Naive thymus-derived CD4-positive, alpha-beta T cell (primary cell): ENCODE measurements at regions of chr7 and their contacts with region 1.

Region 1: GRCh38 chr7:116180302-116180701 is 30.0 kb upstream of the TES start:
- DNase-seq: peak in 7 of 9 donors; percentile 47 to 73 (median 61)
- ATAC-seq: peak; percentile 84
- H3K4me3 ChIP-seq: no peak overlapping the region
- H3K4me3 Mint-ChIP-seq: no peak overlapping the region
- H3K27ac ChIP-seq: no peak overlapping the region
- H3K27ac Mint-ChIP-seq: peak overlapping the region in 1 of 9 donors; percentile 36
- H3K4me1 ChIP-seq: peaks cover 0 to 3% of the 10 kb centered on the region in 2 donors
- H3K4me1 Mint-ChIP-seq: peaks cover 0 to 12% (median 2%) of the 10 kb centered on the region in 7 donors
- H3K27me3 ChIP-seq: no peaks in the 10 kb centered on the region
- H3K27me3 Mint-ChIP-seq: peaks cover 0 to 15% (median 0%) of the 10 kb centered on the region in 5 donors

Region 2: DNA sequence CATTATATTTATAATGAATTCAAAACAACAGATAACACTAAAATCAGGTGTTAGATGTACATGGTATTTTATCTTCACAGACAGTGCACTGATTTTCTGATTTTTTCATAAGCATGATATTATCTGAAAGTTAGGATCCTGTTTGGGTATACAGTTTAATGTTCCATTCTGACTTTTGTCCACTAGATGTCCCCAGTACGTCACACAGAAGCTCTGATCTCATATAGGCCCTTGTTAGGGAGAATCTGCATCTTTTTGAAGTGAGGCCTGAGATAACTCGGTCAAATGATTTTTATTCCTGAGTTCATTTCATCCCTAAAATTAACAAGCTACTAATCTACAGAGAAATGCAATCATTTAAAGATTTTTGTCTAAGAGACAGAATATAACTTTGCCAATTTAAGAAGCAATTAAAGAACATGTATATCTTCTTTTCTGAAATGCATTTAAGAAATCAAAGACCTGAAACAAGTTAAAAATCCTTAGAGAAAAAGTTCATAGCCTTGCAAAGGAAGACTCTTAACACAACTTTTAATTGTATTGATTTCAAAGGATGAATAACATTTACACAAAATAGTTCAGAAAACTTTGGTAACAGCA is 42.0 kb before region 1 on chr7:
- CTCF ChIA-PET with region 1: interaction called, 3 read pairs
- POLR2A ChIA-PET with region 1: no interaction called
- intact Hi-C with region 1: loop called in 1 of 2 experiments (anchors 2 kb)
- DNase-seq: peak in 5 of 9 donors; percentile 22 to 42 (median 27)
- ATAC-seq: peak; percentile 89
- H3K4me3 ChIP-seq: no peak overlapping the region
- H3K4me3 Mint-ChIP-seq: no peak overlapping the region
- H3K27ac ChIP-seq: no peak overlapping the region
- H3K27ac Mint-ChIP-seq: no peak overlapping the region
- H3K4me1 ChIP-seq: no peaks in the 10 kb centered on the region
- H3K4me1 Mint-ChIP-seq: peaks cover 0 to 18% (median 8%) of the 10 kb centered on the region in 7 donors
- H3K27me3 ChIP-seq: peaks cover 0 to 2% of the 10 kb centered on the region in 2 donors
- H3K27me3 Mint-ChIP-seq: peaks cover 0 to 22% (median 10%) of the 10 kb centered on the region in 5 donors

Region 3: GRCh38 chr7:116218051-116218645 is 37.8 kb after region 1 on chr7:
- CTCF ChIA-PET with region 1: interaction called, 42 read pairs
- POLR2A ChIA-PET with region 1: no interaction called
- intact Hi-C with region 1: no loop called
- DNase-seq: no peak
- ATAC-seq: peak; percentile 36
- H3K4me3 ChIP-seq: no peak overlapping the region
- H3K4me3 Mint-ChIP-seq: peak overlapping the region in 9 of 10 donors; percentile 41 to 76 (median 61)
- H3K27ac ChIP-seq: peak overlapping the region; percentile 4
- H3K27ac Mint-ChIP-seq: peak overlapping the region; percentile 0 to 92 (median 44)
- H3K4me1 ChIP-seq: peaks cover 82 to 85% of the 10 kb centered on the region in 2 donors
- H3K4me1 Mint-ChIP-seq: peaks cover 69 to 96% (median 92%) of the 10 kb centered on the region in 7 donors
- H3K27me3 ChIP-seq: no peaks in the 10 kb centered on the region
- H3K27me3 Mint-ChIP-seq: no peaks in the 10 kb centered on the region

Region 4: GRCh38 chr7:116251675-116252074 is 71.4 kb after region 1 on chr7:
- CTCF ChIA-PET with region 1: interaction called, 10 read pairs
- POLR2A ChIA-PET with region 1: no interaction called
- intact Hi-C with region 1: no loop called
- DNase-seq: no peak
- ATAC-seq: no peak
- H3K4me3 ChIP-seq: no peak overlapping the region
- H3K4me3 Mint-ChIP-seq: no peak overlapping the region
- H3K27ac ChIP-seq: no peak overlapping the region
- H3K27ac Mint-ChIP-seq: peak overlapping the region in 6 of 9 donors; percentile 14 to 65 (median 48)
- H3K4me1 ChIP-seq: no peaks in the 10 kb centered on the region
- H3K4me1 Mint-ChIP-seq: peaks cover 7 to 46% (median 29%) of the 10 kb centered on the region in 7 donors
- H3K27me3 ChIP-seq: no peaks in the 10 kb centered on the region
- H3K27me3 Mint-ChIP-seq: no peaks in the 10 kb centered on the region

Region 5: DNA sequence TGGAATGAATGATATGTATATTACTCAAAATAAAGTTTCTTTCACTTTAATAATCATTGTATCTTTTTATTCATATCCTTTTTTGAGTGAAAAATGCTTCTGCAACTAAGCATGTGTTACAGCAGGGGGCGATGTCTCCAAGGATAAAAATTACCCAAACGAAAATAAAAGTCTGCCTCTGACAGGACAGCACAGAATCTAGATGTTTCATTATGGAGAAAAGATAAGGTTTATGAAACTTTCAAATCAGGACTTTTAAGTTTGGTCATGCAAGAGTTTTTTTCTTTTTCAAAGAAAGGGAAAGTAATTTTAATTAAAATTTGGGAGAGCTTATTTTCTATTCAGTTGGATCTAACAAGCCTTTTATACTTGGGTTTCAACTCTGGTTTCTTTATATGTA is 78.4 kb after region 1 on chr7:
- CTCF ChIA-PET with region 1: interaction called, 10 read pairs
- POLR2A ChIA-PET with region 1: no interaction called
- intact Hi-C with region 1: loop called in 1 of 2 experiments (anchors 1 kb)
- DNase-seq: peak in 7 of 9 donors; percentile 14 to 45 (median 36)
- ATAC-seq: peak; percentile 82
- H3K4me3 ChIP-seq: no peak overlapping the region
- H3K4me3 Mint-ChIP-seq: no peak overlapping the region
- H3K27ac ChIP-seq: no peak overlapping the region
- H3K27ac Mint-ChIP-seq: peak overlapping the region in 7 of 9 donors; percentile 33 to 79 (median 49)
- H3K4me1 ChIP-seq: no peaks in the 10 kb centered on the region
- H3K4me1 Mint-ChIP-seq: peaks cover 10 to 26% (median 15%) of the 10 kb centered on the region in 7 donors
- H3K27me3 ChIP-seq: no peaks in the 10 kb centered on the region
- H3K27me3 Mint-ChIP-seq: peaks cover 0 to 5% (median 0%) of the 10 kb centered on the region in 5 donors